ENCODE measurements at regions of chr11 and their contacts with region 1.

Region 1: GRCh38 chr11:118046051-118046963 is 30.6 kb upstream of the TMPRSS4 start:
- DNase-seq: no peak
- H3K4me3 ChIP-seq: no peak overlapping the region
- H3K27ac ChIP-seq: no peak overlapping the region
- H3K4me1 ChIP-seq: no peaks in the 10 kb centered on the region
- H3K27me3 ChIP-seq: peaks cover 61% of the 10 kb centered on the region
- CTCF ChIP-seq: no peak

Region 2: DNA sequence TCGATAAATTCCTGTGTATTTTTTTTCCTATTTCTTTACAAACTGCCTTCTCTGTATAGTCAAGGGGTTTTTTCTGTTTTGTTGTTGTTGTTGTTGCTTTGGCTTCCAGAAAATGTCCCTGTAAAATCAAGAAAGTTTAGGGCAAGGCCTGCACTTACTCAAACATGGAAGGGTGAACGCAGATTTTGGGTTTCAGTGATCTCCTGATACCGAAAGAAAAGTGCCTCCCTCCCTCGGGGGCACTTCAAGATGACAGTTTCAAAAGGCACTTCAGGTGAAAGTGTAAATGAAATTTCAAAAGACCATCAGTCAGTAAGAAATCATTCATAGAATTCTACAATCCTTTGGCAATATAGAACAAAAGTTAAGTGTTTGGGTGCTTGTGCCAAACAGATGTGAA is 12.9 kb before region 1 on chr11:
- CTCF ChIA-PET with region 1: interaction called, 4 read pairs
- POLR2A ChIA-PET with region 1: interaction called, 10 read pairs
- intact Hi-C with region 1: no loop called
- DNase-seq: no peak
- H3K4me3 ChIP-seq: no peak overlapping the region
- H3K27ac ChIP-seq: no peak overlapping the region
- H3K4me1 ChIP-seq: no peaks in the 10 kb centered on the region
- H3K27me3 ChIP-seq: no peaks in the 10 kb centered on the region
- CTCF ChIP-seq: no peak

Region 3: GRCh38 chr11:118058311-118059245 is 12.3 kb after region 1 on chr11:
- CTCF ChIA-PET with region 1: interaction called, 13 read pairs
- POLR2A ChIA-PET with region 1: no interaction called
- intact Hi-C with region 1: no loop called
- DNase-seq: no peak
- H3K4me3 ChIP-seq: no peak overlapping the region
- H3K27ac ChIP-seq: no peak overlapping the region
- H3K4me1 ChIP-seq: no peaks in the 10 kb centered on the region
- H3K27me3 ChIP-seq: peaks cover 28% of the 10 kb centered on the region
- CTCF ChIP-seq: no peak

Region 4: DNA sequence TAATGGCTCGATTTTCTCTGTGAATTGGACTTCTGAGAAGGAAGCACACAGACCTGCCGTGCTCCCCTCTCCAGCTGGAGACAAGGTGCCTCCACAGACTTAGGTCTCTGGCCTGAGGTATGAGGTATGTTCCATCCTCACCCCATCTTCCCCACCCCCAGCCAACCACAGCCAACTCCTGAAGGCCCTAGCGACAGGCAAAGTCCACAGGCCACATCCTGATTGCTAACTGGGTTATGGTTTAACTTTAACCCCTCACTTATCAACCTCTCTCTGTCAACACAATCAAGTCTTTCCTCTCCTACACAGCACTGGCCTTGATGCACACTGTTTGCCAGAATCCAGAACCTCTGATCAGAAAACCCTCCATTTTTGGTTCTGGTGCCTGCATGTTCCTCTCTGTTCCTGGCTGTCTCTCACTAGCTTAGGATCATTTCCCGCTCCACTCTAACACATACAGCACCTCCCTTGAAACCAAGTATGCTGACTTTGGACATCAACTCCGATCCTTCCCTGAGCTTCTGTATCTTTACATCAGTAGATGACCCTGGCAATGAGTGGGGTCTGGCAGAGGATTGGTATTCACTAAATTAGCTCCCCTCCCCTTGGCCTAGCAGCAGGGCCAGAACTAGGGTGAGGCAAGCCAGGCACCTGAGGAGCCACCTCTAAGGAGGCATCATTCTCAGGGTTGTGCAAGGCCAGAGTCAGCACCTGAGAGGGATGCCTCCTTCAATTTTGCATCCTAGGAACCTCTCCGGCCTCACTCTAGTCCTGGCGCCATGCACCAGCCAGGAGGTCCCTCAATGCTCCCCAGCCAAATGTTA is 156.5 kb after region 1 on chr11:
- CTCF ChIA-PET with region 1: no interaction called
- POLR2A ChIA-PET with region 1: no interaction called
- intact Hi-C with region 1: no loop called
- DNase-seq: no peak
- H3K4me3 ChIP-seq: no peak overlapping the region
- H3K27ac ChIP-seq: no peak overlapping the region
- H3K4me1 ChIP-seq: no peaks in the 10 kb centered on the region
- H3K27me3 ChIP-seq: peaks cover 35% of the 10 kb centered on the region
- CTCF ChIP-seq: no peak